ENCODE measurements at regions of chr1 and their contacts with region 1.

Region 1: GRCh38 chr1:206583707-206584648 is 28.3 kb downstream of the EIF2D start:
- DNase-seq: no peak
- H3K4me3 ChIP-seq: no peak overlapping the region
- CTCF ChIP-seq: peak; percentile 72

Region 2: DNA sequence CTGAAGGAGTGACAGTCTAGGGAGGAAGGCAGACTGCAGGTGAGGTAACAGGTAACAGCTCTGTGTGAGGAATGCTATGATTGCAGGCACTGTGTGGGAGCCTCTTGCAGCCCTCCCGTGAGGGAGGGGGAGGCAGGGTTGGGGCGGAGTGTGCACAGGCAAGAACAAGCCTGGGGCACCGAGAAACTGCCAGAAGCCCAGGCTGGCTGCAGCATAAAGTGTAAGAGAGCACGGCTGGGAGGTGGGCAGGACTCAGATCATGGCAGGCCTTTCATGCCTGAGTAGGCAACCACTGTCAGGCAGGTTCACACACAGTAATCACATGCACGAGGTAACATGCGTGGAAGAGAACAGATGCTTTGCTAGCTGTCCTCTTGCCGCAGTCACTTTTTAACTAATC is 542.3 kb before region 1 on chr1:
- CTCF ChIA-PET with region 1: no interaction called
- POLR2A ChIA-PET with region 1: no interaction called
- DNase-seq: no peak
- H3K4me3 ChIP-seq: no peak overlapping the region
- CTCF ChIP-seq: no peak

Region 3: GRCh38 chr1:206513312-206514111 is 70.5 kb before region 1 on chr1:
- CTCF ChIA-PET with region 1: interaction called, 11 read pairs
- POLR2A ChIA-PET with region 1: no interaction called
- DNase-seq: no peak
- H3K4me3 ChIP-seq: no peak overlapping the region
- CTCF ChIP-seq: no peak

Region 4: DNA sequence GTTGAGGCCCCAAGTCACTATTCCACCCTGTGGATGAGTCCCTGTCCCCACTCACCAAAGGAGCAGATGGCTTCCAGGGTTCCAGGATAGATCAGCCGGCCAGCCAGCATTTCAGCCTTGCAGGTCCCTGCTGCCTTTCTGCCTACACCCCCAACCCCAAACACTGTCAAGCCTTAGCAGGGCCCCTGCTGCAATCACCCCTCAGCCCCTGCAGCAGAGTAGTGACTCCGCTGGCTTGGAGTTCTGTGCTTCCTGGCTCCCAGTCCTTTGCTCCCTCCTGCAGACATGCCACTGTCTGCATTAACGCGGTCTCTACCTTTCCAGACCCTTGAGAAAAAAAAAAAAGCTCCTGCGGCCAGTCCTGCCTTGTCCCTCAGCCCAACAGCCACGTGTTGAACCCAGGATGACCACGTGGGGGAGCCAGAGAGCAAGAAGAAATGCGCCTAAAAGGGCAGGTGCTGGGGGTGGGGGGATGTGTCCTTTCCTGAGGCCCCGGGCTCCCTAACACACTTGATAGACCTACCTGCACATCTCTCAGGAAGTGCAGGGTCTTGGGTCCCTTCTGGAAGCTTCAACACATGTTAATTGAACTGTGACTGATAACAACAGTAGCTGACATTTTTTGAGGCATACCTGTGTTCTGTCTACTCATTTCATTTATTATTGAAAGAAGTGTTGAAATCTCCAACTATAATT is 39.3 kb before region 1 on chr1:
- CTCF ChIA-PET with region 1: interaction called, 215 read pairs
- POLR2A ChIA-PET with region 1: no interaction called
- DNase-seq: no peak
- H3K4me3 ChIP-seq: no peak overlapping the region
- CTCF ChIP-seq: peak; percentile 88

Region 5: DNA sequence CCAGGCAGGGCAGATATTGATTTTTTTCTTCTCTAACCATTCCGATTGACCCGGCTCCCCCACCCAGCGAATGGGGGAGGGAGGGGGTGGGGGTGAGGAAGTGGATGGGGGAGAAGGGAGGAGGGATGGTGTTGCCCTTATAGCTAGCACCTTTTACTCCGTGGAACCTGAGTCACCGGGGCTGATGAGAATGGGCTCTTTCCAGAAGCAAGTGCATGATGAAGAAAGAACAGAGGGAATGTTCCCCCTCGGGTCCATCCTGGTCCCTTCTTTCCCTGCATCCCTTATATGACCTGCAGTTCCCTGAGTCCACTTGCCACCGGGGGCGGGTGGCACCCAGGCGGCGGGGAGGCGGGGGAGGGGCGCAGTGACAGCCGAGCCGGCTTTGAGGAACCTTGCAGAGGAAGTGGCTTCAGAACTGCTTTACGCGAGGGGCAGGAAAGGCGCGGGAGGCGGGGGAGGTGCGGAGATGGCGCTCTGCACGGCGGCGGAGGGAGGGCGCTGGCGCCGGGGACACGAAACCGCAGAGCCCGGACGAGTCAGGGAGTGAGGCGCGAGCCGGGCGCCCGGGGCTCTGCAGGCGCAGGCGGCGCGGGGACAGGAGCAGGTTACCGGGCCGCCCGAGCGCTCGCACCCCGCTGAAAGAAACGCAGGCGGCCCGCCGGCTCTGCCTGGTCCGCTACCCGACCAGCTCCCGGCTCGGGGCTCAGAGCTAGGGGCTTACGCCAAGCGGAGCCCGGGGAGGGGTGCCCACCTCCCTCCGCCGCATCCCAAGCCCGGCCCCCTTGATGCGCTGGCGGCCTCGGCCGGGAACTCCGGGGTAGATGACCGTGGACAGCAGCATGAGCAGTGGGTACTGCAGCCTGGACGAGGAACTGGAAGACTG is 27.0 kb before region 1 on chr1:
- CTCF ChIA-PET with region 1: interaction called, 23 read pairs
- POLR2A ChIA-PET with region 1: no interaction called
- DNase-seq: no peak
- H3K4me3 ChIP-seq: peak overlapping the region; percentile 53
- CTCF ChIP-seq: no peak

Region 6: DNA sequence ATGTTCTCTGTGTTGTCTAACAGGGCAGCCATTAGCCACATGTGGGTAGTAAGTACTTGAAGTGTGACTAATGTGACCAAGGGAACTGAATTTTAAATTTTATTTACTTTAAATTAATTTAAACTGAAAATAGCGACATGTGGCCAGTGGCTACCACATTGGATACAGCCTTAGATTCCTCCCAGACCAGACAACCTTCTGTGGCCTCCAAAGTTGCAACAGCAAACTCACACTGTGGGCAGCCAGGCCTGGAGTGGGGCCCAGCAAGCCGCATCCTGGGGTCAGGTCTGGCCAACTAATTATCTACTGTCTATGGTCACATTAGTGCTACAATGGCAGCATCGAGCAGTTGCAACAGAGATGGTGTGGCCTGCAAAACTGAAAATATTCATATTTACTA is 16.5 kb after region 1 on chr1:
- CTCF ChIA-PET with region 1: interaction called, 52 read pairs
- POLR2A ChIA-PET with region 1: no interaction called
- DNase-seq: no peak
- H3K4me3 ChIP-seq: no peak overlapping the region
- CTCF ChIP-seq: no peak